Activated CD8-positive, alpha-beta T cell treated with anti-CD3 and anti-CD28 coated beads, Interleukin-2, amount 10 ng/mL, durations not matched to agents 7 days and 5 days (primary cell): ENCODE measurements at regions of chr5 and their contacts with region 1.

Region 1: GRCh38 chr5:57137401-57137800 is 36.5 kb upstream of the GPBP1 start:
- DNase-seq: no peak
- ATAC-seq: no peak
- H3K4me3 Mint-ChIP-seq: no peak overlapping the region
- H3K27ac Mint-ChIP-seq: no peak overlapping the region
- H3K4me1 Mint-ChIP-seq: no peaks in the 10 kb centered on the region
- H3K27me3 Mint-ChIP-seq: peaks cover 20% of the 10 kb centered on the region

Region 2: GRCh38 chr5:56893251-56893951 is 244.0 kb before region 1 on chr5:
- CTCF ChIA-PET with region 1: interaction called, 54 read pairs
- POLR2A ChIA-PET with region 1: interaction called, 3 read pairs
- DNase-seq: no peak
- ATAC-seq: no peak
- H3K4me3 Mint-ChIP-seq: no peak overlapping the region
- H3K27ac Mint-ChIP-seq: peak overlapping the region; percentile 1
- H3K4me1 Mint-ChIP-seq: peaks cover 9% of the 10 kb centered on the region
- H3K27me3 Mint-ChIP-seq: no peaks in the 10 kb centered on the region

Region 3: GRCh38 chr5:56909294-56910209 is 227.8 kb before region 1 on chr5 and contains the start of gene SETD9:
- CTCF ChIA-PET with region 1: interaction called, 15 read pairs
- POLR2A ChIA-PET with region 1: no interaction called
- DNase-seq: peak; percentile 95
- ATAC-seq: peak; percentile 89
- H3K4me3 Mint-ChIP-seq: peak within 1 kb of the TSS; percentile 81
- H3K27ac Mint-ChIP-seq: peak within 1 kb of the TSS; percentile 86
- H3K4me1 Mint-ChIP-seq: peaks cover 24% of the 10 kb centered on the region
- H3K27me3 Mint-ChIP-seq: peaks cover 15% of the 10 kb centered on the region
- total RNA-seq, gene SETD9: 4.7 to 5.6 TPM

Region 4: DNA sequence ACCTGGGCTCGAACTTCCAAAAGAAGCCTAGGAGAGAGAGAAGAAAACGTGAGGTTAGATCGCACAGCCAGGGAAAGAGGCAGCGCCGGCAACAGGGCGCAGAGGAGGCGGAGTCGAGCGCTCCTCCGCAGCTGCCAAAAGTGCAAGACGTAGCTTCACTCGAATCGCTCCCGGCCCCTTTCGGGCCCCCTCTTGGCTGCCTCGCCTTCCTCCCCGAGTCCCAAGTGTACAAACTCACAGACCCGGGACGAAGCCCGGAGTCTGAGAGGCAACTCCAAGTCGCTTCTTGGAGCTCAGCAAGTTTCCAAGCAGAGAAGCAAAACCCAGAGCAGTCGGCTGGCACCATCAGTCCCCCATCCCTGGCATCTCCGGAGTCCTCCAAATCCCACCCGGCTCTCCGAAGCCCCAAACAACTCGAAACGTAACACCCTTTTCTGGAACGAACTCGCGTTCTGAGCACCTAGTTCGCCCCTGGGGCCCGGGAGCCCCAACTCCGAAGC is 186.7 kb before region 1 on chr5:
- CTCF ChIA-PET with region 1: interaction called, 31 read pairs
- POLR2A ChIA-PET with region 1: no interaction called
- DNase-seq: peak; percentile 68
- ATAC-seq: peak; percentile 59
- H3K4me3 Mint-ChIP-seq: peak overlapping the region; percentile 98
- H3K27ac Mint-ChIP-seq: peak overlapping the region; percentile 83
- H3K4me1 Mint-ChIP-seq: peaks cover 24% of the 10 kb centered on the region
- H3K27me3 Mint-ChIP-seq: peaks cover 17% of the 10 kb centered on the region

Region 5: GRCh38 chr5:57163553-57164006 is 26.2 kb after region 1 on chr5:
- CTCF ChIA-PET with region 1: interaction called, 16 read pairs
- POLR2A ChIA-PET with region 1: no interaction called
- DNase-seq: no peak
- ATAC-seq: no peak
- H3K4me3 Mint-ChIP-seq: no peak overlapping the region
- H3K27ac Mint-ChIP-seq: no peak overlapping the region
- H3K4me1 Mint-ChIP-seq: peaks cover 11% of the 10 kb centered on the region
- H3K27me3 Mint-ChIP-seq: no peaks in the 10 kb centered on the region

Region 6: GRCh38 chr5:57181154-57181553 is 43.8 kb after region 1 on chr5:
- CTCF ChIA-PET with region 1: no interaction called
- POLR2A ChIA-PET with region 1: no interaction called
- DNase-seq: peak; percentile 48
- ATAC-seq: peak; percentile 34
- H3K4me3 Mint-ChIP-seq: peak overlapping the region; percentile 66
- H3K27ac Mint-ChIP-seq: peak overlapping the region; percentile 65
- H3K4me1 Mint-ChIP-seq: peaks cover 63% of the 10 kb centered on the region
- H3K27me3 Mint-ChIP-seq: no peaks in the 10 kb centered on the region